ENCODE measurements at regions of chr1 and their contacts with region 1.

Region 1: GRCh38 chr1:9874959-9875635 is 35.0 kb downstream of the CTNNBIP1 start:
- H3K4me3 ChIP-seq: no peak overlapping the region
- H3K27ac ChIP-seq: no peak overlapping the region
- H3K4me1 ChIP-seq: no peaks in the 10 kb centered on the region; the same call in 1 of the 2 replicates
- CTCF ChIP-seq: peak; percentile 90

Region 2: GRCh38 chr1:9784508-9785133 is 90.5 kb before region 1 on chr1:
- CTCF ChIA-PET with region 1: interaction called, 22 read pairs
- POLR2A ChIA-PET with region 1: no interaction called
- H3K4me3 ChIP-seq: no peak overlapping the region
- H3K27ac ChIP-seq: no peak overlapping the region
- H3K4me1 ChIP-seq: 0 out of 2 replicates have a peak, but pooled peaks cover 3% of the 10 kb centered on the region
- CTCF ChIP-seq: peak; percentile 40

Region 3: DNA sequence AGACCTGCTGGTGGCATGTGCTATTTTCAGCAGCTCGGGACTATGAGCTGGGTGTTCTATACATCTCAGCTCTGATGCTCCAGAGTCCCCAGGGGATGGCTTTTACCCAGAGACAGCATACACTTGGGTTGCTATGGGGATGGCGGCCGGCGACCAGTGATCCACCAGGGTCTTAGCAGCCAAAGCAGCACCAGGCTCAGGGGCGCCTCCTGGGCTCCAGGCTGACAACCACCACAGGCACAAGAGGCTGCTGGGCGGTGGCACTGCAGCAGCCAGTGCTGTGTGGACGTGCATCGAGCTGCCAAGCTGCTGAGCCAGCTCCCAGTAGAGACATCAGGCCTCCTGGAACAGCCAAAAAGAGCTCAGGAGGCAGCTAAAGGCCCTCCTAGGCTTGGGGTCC is 13.7 kb before region 1 on chr1:
- CTCF ChIA-PET with region 1: interaction called, 12 read pairs
- POLR2A ChIA-PET with region 1: no interaction called
- H3K4me3 ChIP-seq: no peak overlapping the region
- H3K27ac ChIP-seq: no peak overlapping the region
- H3K4me1 ChIP-seq: no peaks in the 10 kb centered on the region
- CTCF ChIP-seq: no peak

Region 4: DNA sequence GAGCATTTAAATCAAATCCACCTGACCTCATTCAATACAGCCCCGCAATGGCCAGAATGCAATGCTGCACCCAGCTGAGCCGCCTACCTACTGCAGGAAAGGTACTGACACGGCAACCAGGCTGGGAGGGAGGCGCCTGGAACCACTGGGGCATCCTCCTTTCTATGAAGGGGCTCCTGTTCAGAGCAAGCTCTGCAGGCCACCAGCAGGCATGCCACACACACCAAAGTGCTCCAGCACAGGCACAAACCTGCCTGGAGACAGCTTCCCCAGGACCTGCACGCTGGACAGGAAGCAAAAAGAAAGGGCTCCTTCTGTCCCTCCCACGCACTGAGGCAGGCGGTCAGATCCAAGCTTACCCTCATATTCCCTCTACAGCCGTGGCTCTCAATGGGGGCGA is 13.8 kb after region 1 on chr1:
- CTCF ChIA-PET with region 1: interaction called, 16 read pairs
- POLR2A ChIA-PET with region 1: no interaction called
- H3K4me3 ChIP-seq: no peak overlapping the region
- H3K27ac ChIP-seq: no peak overlapping the region
- H3K4me1 ChIP-seq: peaks cover 23% of the 10 kb centered on the region
- CTCF ChIP-seq: no peak

Region 5: DNA sequence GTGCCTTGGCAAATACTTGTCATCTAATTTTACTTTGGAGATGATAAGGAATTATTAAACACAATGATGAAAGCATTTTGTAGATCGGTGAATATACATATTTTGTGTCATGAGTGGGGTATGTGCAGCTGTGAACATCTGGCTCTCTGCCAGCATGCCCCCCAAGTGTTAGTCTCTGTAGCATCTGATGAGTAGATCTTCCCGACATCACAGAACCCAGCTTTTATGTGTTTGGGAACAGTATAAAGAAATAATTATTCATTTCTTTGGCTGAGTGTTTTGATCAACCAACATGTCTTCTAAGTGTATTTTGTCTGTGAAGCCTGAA is 39.5 kb after region 1 on chr1:
- CTCF ChIA-PET with region 1: interaction called, 24 read pairs
- POLR2A ChIA-PET with region 1: interaction called, 4 read pairs
- H3K4me3 ChIP-seq: no peak overlapping the region
- H3K27ac ChIP-seq: no peak overlapping the region
- H3K4me1 ChIP-seq: peaks cover 3% of the 10 kb centered on the region; the same call in 1 of the 2 replicates
- CTCF ChIP-seq: no peak; the same call in 1 of the 2 replicates

Region 6: DNA sequence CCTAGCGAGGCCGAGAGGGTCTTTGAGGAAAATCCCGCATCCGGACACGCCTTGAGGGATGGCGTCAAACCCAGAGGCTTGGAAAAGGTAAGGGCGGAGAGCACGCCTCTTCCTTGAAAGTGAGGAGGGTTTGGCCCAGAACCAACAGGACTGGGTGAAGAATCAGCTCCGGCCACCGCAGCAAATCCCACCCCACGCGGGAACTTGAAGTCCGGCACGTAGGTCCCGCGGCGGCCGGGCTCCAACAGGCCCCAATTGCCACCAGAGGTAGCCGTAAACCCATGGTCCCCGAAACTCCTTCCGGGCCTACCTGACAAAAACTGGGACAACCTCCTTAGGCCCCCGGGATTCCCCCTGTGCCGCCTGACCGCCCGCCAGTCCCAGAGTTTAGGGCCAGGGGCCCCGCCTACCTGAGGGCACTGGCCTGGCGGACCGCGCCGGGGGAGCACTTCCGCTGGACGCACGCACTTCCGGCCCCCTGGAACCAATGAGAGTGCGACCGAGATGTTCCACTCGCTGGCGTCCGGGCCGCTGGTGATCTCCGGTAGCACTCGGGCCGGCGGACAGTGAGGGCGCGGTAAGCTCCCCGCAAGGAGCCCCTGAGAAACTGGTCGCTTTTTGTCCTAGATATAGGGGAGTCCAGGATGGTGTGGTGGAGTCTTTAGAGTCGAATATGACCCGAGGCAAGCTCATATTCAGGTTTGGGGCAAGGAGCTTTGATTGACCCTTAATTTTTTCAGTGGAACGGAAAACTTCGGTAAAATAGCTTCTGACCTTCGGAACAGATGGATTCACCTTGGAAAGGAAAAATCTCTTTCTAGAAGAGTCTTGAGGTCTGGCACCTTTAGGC is 68.1 kb after region 1 on chr1 and contains the starts of genes LZIC and NMNAT1:
- CTCF ChIA-PET with region 1: interaction called, 19 read pairs
- POLR2A ChIA-PET with region 1: interaction called, 5 read pairs
- H3K4me3 ChIP-seq: peak within 1 kb of the TSS; percentile 89
- H3K27ac ChIP-seq: peak within 1 kb of the TSS; percentile 69
- H3K4me1 ChIP-seq: no peaks in the 10 kb centered on the region
- CTCF ChIP-seq: peak; percentile 13; the same call in 1 of the 2 replicates

Region 7: GRCh38 chr1:9996624-9997582 is 121.8 kb after region 1 on chr1 and contains the start of gene RBP7:
- CTCF ChIA-PET with region 1: no interaction called
- POLR2A ChIA-PET with region 1: no interaction called
- H3K4me3 ChIP-seq: peak within 1 kb of the TSS; percentile 36
- H3K27ac ChIP-seq: no peak within 1 kb of the TSS
- H3K4me1 ChIP-seq: no peaks in the 10 kb centered on the region
- CTCF ChIP-seq: peak; percentile 40; the same call in 1 of the 2 replicates

Region 8: GRCh38 chr1:10045480-10046355 is 170.6 kb after region 1 on chr1:
- CTCF ChIA-PET with region 1: no interaction called
- POLR2A ChIA-PET with region 1: no interaction called
- H3K4me3 ChIP-seq: no peak overlapping the region
- H3K27ac ChIP-seq: no peak overlapping the region
- H3K4me1 ChIP-seq: no peaks in the 10 kb centered on the region
- CTCF ChIP-seq: no peak

Region 9: DNA sequence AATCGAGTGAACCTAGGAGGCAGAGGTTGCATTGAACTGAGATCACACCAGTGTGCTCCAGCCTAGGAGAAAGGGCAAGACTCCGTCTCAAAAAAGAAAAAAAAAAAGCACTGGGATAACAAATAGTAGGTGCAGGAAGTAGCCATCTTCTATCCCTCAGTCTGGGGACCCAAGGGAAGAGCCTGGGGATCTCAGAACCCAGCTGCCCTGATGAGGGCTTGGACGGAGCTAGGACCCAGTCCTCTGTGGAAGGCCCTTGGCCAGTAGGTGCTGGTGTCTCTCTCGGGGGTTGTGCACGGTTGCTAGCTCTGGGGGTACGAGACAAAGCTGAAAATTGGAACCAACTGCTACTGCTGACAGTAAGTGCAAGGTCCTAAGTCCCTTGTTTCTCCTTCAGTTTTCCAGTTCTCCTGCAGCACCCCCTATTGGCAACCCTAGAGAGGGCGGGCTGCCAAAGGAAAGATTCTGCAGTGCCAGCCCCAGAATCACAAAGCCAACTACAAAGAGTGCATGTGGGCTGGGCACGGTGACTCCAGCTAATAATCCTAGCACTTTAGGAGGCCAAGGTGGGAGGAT is 277.7 kb after region 1 on chr1:
- CTCF ChIA-PET with region 1: interaction called, 17 read pairs
- POLR2A ChIA-PET with region 1: no interaction called
- H3K4me3 ChIP-seq: no peak overlapping the region
- H3K27ac ChIP-seq: no peak overlapping the region
- H3K4me1 ChIP-seq: no peaks in the 10 kb centered on the region
- CTCF ChIP-seq: no peak